ENCODE measurements at regions of chr3 and their contacts with region 1.

Region 1: GRCh38 chr3:8359133-8359532 is 142.5 kb upstream of the LMCD1 start:
- DNase-seq: no peak
- H3K4me3 ChIP-seq: no peak overlapping the region
- H3K4me3 Mint-ChIP-seq: peak overlapping the region in 5 of 8 donors; percentile 50 to 71 (median 61)
- H3K27ac ChIP-seq: no peak overlapping the region
- H3K27ac Mint-ChIP-seq: peak overlapping the region in 6 of 7 donors; percentile 16 to 85 (median 64)
- H3K4me1 ChIP-seq: peaks cover 52% of the 10 kb centered on the region
- H3K4me1 Mint-ChIP-seq: peaks cover 30 to 62% (median 47%) of the 10 kb centered on the region in 4 donors
- H3K27me3 ChIP-seq: no peaks in the 10 kb centered on the region
- H3K27me3 Mint-ChIP-seq: peaks cover 0 to 2% of the 10 kb centered on the region in 2 donors

Region 2: DNA sequence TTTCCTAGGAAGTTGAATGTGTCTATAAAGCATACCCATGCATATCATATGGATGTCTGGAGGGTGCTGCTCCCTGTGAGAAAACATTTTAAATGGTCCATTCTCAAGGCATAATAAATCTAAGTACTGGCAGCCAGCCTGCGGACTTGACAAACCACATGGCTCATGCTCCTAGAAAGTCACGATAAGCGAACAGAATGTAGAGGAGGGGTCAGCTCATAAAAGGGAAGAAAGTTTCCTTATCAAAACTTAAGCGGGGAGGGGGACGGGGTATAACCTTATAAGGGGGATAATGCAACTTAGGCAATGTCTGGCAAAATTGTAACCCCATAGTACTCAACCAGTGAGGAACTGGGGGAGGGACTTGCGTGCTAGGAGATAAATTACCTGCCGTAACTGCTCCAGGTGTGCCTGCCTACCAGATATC is 17.3 kb before region 1 on chr3:
- CTCF ChIA-PET with region 1: interaction called, 8 read pairs
- POLR2A ChIA-PET with region 1: interaction called, 5 read pairs
- intact Hi-C with region 1: loop called (anchors 2 kb)
- DNase-seq: no peak
- H3K4me3 ChIP-seq: no peak overlapping the region
- H3K4me3 Mint-ChIP-seq: peak overlapping the region in 1 of 8 donors; percentile 22
- H3K27ac ChIP-seq: no peak overlapping the region
- H3K27ac Mint-ChIP-seq: no peak overlapping the region
- H3K4me1 ChIP-seq: no peaks in the 10 kb centered on the region
- H3K4me1 Mint-ChIP-seq: peaks cover 0 to 6% (median 3%) of the 10 kb centered on the region in 4 donors
- H3K27me3 ChIP-seq: no peaks in the 10 kb centered on the region
- H3K27me3 Mint-ChIP-seq: peaks cover 0 to 2% of the 10 kb centered on the region in 2 donors

Region 3: GRCh38 chr3:8501371-8502131 is 142.4 kb after region 1 on chr3 and contains the start of gene LMCD1:
- CTCF ChIA-PET with region 1: no interaction called
- POLR2A ChIA-PET with region 1: no interaction called
- intact Hi-C with region 1: loop called (anchors 1 kb)
- DNase-seq: peak; percentile 64 to 84 (median 81)
- H3K4me3 ChIP-seq: peak within 1 kb of the TSS in 1 of 2 donors; percentile 36
- H3K4me3 Mint-ChIP-seq: peak within 1 kb of the TSS; percentile 84 to 93 (median 88)
- H3K27ac ChIP-seq: peak within 1 kb of the TSS; percentile 27
- H3K27ac Mint-ChIP-seq: peak within 1 kb of the TSS; percentile 31 to 95 (median 81)
- H3K4me1 ChIP-seq: peaks cover 21% of the 10 kb centered on the region
- H3K4me1 Mint-ChIP-seq: peaks cover 5 to 26% (median 11%) of the 10 kb centered on the region in 4 donors
- H3K27me3 ChIP-seq: no peaks in the 10 kb centered on the region
- H3K27me3 Mint-ChIP-seq: no peaks in the 10 kb centered on the region
- total RNA-seq, gene LMCD1: 0.53 to 1.1 TPM

Measured in CD4-positive, alpha-beta memory T cell (primary cell).